Mammary epithelial cell (primary cell): ENCODE measurements at regions of chr12 and their contacts with region 1.

Region 1: GRCh38 chr12:110826592-110827200 is 20.1 kb upstream of the CCDC63 start:
- DNase-seq: peak; percentile 80
- H3K4me3 ChIP-seq: no peak overlapping the region
- H3K27ac ChIP-seq: no peak overlapping the region
- H3K4me1 ChIP-seq: no peaks in the 10 kb centered on the region
- H3K27me3 ChIP-seq: no peaks in the 10 kb centered on the region
- CTCF ChIP-seq: peak; percentile 80 to 83

Region 2: DNA sequence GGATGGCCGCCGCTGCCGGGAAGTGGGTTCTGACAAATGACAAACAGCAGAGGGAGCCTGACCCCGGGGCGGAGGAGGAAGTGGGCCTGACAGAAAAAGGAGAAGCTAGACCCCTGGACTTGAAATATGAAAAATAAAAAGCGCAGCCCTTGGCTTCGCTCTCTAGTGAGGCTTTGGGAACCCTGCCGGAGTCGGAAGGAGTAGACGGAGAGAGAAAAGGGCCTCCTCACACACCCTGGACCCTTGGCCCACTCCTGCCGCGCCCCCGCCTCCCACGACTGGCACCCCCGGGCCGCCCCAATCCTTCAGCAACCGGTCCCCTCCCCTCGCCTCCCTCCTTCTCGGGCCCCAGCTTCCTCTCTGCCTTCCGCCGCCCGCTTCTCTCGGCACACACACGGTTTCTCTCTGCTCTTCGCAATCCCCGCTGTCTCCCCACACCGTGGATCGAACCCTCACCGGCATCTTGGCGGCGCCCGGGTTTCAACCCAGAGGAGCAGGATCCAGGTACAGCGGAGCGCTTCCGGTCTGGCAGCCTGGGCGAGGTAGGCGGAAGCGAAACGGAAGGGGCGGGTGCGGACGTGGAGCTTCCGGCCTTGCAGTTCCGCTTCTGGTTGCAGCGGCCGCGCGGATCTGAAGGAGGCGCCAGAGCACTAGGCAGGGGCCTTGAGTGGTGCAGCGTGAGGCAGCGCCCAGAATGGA is 376.7 kb before region 1 on chr12 and contains the start of gene ARPC3:
- CTCF ChIA-PET with region 1: no interaction called
- dilution Hi-C with region 1: no loop called
- in situ Hi-C with region 1: no loop called
- intact Hi-C with region 1: loop called (anchors 1 kb)
- DNase-seq: peak; percentile 93
- H3K4me3 ChIP-seq: peak within 1 kb of the TSS; percentile 62 to 100 (median 94)
- H3K27ac ChIP-seq: peak within 1 kb of the TSS; percentile 61
- H3K4me1 ChIP-seq: no peaks in the 10 kb centered on the region
- H3K27me3 ChIP-seq: no peaks in the 10 kb centered on the region
- CTCF ChIP-seq: peak; percentile 80 to 95
- total RNA-seq, gene ARPC3: 290 to 318 TPM

Region 3: DNA sequence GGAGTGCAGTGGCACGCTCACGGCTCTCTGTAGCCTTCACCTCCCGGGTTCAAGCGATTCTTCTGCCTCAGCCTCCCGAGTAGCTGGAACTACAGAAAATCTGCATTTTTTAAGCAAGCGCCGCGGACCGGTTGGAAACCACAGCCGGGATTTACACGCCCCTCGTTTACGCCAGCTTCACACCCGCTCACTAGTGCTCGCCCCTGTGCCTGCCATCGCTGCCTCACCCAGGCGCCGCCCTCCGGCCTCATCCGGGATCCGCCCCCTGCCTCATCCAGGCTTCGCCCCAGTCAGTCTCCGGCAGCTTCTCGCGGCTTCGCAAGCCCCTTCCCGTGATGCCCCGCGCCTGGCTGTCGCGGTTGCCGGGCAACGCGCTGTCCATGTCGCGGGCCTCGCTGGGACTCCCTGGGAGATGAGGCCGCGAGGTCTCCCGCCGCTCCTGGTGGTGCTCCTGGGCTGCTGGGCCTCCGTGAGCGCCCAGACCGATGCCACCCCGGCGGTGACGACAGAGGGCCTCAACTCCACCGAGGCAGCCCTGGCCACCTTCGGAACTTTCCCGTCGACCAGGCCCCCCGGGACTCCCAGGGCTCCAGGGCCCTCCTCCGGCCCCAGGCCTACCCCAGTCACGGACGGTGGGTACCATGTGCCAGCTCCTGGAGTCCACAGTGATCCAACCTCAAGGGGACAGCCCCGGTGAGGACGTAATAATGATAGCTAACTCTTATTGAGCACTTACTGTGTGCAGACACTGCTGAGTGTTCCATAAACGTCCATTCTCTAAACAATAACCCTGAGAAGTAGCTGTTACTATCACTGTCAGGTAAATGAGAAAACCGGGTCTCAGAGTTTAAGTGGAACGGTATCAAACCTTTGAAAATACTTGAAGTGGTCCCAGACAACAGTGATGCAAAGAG is 212.7 kb before region 1 on chr12 and contains the start of gene TCTN1:
- CTCF ChIA-PET with region 1: no interaction called
- dilution Hi-C with region 1: no loop called
- in situ Hi-C with region 1: loop called (anchors 10 kb)
- intact Hi-C with region 1: loop called (anchors 1 kb)
- DNase-seq: peak; percentile 90
- H3K4me3 ChIP-seq: peak within 1 kb of the TSS; percentile 64 to 92 (median 77)
- H3K27ac ChIP-seq: peak within 1 kb of the TSS; percentile 79
- H3K4me1 ChIP-seq: peaks cover 7% of the 10 kb centered on the region
- H3K27me3 ChIP-seq: no peaks in the 10 kb centered on the region
- CTCF ChIP-seq: peak in 1 of 2 donors; percentile 19
- total RNA-seq, gene TCTN1: 19.4 to 36.0 TPM

Region 4: DNA sequence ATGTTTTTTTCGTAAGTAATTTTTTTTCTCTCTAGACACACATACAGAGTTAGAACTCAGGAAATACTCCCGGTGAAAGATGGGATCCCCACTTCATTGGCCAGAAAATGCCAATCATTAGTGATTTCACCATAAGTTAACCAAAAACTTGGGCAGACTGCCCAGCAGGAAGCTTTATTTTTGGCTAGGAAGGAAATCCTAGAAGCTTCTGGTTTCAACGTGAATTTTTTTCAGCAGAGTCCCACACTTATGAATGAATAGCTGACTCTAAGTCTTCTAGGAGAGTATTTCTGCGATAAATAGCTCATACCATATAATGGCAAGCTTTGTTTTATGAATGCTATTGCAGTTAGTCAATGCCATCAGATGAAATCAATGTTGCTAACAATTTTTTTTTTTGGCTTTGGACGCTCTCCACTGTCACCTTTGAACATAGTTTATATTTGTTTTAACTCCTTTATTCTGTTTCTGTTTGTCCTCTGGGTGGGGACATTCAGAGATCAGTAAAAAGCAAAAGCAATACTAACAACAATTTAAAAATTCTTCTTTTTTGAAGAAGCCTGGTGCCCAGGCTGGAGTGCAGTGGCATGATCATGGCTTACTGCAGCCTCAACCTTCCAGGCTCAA is 93.5 kb before region 1 on chr12:
- CTCF ChIA-PET with region 1: no interaction called
- dilution Hi-C with region 1: loop called (anchors 5 kb)
- in situ Hi-C with region 1: no loop called
- intact Hi-C with region 1: no loop called
- DNase-seq: peak; percentile 9
- H3K4me3 ChIP-seq: no peak overlapping the region
- H3K27ac ChIP-seq: no peak overlapping the region
- H3K4me1 ChIP-seq: peaks cover 10% of the 10 kb centered on the region
- H3K27me3 ChIP-seq: no peaks in the 10 kb centered on the region
- CTCF ChIP-seq: no peak

Region 5: DNA sequence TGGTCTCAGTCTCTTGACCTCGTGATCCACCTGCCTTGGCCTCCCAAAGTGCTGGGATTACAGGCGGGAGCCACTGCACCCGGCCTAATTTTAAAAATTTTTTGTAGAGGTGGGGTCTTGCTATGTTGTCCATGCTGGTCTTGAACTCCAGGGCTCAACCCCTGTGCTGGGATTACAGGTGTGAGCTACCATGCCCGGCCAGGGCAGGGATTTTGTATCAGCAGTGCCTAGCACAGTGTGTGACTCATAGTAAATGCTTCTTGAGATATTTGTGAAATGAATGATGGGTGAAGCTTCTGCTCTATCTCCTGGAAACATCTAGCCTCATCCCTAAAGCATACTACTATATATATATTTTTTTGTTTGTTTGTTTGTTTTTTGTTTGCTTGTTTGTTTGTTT is 56.6 kb after region 1 on chr12:
- CTCF ChIA-PET with region 1: interaction called, 3 read pairs
- dilution Hi-C with region 1: loop called (anchors 5 kb)
- in situ Hi-C with region 1: no loop called
- intact Hi-C with region 1: loop called (anchors 1 kb)
- DNase-seq: no peak
- H3K4me3 ChIP-seq: no peak overlapping the region
- H3K27ac ChIP-seq: no peak overlapping the region
- H3K4me1 ChIP-seq: no peaks in the 10 kb centered on the region
- H3K27me3 ChIP-seq: no peaks in the 10 kb centered on the region
- CTCF ChIP-seq: no peak

Region 6: GRCh38 chr12:110932046-110932445 is 105.3 kb after region 1 on chr12:
- CTCF ChIA-PET with region 1: no interaction called
- dilution Hi-C with region 1: no loop called
- in situ Hi-C with region 1: no loop called
- intact Hi-C with region 1: no loop called
- DNase-seq: no peak
- H3K4me3 ChIP-seq: no peak overlapping the region
- H3K27ac ChIP-seq: no peak overlapping the region
- H3K4me1 ChIP-seq: peaks cover 24% of the 10 kb centered on the region
- H3K27me3 ChIP-seq: no peaks in the 10 kb centered on the region
- CTCF ChIP-seq: peak; percentile 20 to 30